MCF 10A (cell line): ENCODE measurements at regions of chr6 and their contacts with region 1.

Region 1: GRCh38 chr6:63272397-63272796 is 47.4 kb downstream of the LGSN start:
- DNase-seq: peak; percentile 62
- H3K4me3 Mint-ChIP-seq: no peak overlapping the region
- H3K27ac Mint-ChIP-seq: no peak overlapping the region
- H3K4me1 Mint-ChIP-seq: no peaks in the 10 kb centered on the region
- H3K27me3 Mint-ChIP-seq: no peaks in the 10 kb centered on the region
- CTCF ChIP-seq: peak; percentile 56

Region 2: GRCh38 chr6:61886608-61887259 is 1385.7 kb before region 1 on chr6:
- CTCF ChIA-PET with region 1: no interaction called
- POLR2A ChIA-PET with region 1: no interaction called
- intact Hi-C with region 1: loop called (anchors 5 kb)
- DNase-seq: peak; percentile 14
- H3K4me3 Mint-ChIP-seq: no peak overlapping the region
- H3K27ac Mint-ChIP-seq: no peak overlapping the region
- H3K4me1 Mint-ChIP-seq: no peaks in the 10 kb centered on the region
- H3K27me3 Mint-ChIP-seq: peaks cover 50% of the 10 kb centered on the region
- CTCF ChIP-seq: no peak

Region 3: GRCh38 chr6:62891065-62891647 is 381.2 kb before region 1 on chr6:
- CTCF ChIA-PET with region 1: interaction called, 3 read pairs
- POLR2A ChIA-PET with region 1: interaction called, 3 read pairs
- intact Hi-C with region 1: loop called (anchors 5 kb)
- DNase-seq: peak; percentile 33
- H3K4me3 Mint-ChIP-seq: no peak overlapping the region
- H3K27ac Mint-ChIP-seq: no peak overlapping the region
- H3K4me1 Mint-ChIP-seq: no peaks in the 10 kb centered on the region
- H3K27me3 Mint-ChIP-seq: peaks cover 45% of the 10 kb centered on the region
- CTCF ChIP-seq: peak; percentile 35

Region 4: DNA sequence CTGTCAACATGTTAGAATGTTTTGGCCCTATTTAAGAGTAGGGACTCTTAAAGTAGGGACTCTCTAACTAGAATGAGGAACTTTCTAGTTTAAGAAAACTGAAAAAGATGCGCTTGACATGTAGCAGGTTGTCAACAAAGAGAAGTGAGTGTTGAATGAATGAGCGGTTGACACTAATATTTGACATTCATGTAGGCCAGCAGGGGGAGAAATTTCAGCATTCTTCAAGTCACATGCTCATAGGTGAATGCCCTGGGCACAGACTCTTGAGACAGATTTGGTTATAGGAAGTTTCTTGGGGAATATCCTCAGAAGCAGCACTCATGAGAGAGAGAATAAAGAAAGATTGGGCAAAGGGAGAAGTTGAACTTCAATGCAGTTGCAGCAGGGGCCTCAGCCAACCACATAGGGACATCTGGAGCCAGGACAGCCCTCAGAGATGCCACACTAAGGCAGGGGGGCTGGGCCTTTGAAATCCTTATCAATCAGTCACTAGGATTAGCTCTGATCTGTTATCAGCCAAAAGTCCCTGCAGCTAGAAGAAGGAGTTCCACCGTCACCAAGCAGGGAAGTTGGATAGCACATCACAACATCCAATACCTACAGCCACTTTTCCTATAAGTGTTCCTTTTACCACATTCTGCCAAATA is 206.2 kb before region 1 on chr6:
- CTCF ChIA-PET with region 1: interaction called, 3 read pairs
- POLR2A ChIA-PET with region 1: no interaction called
- intact Hi-C with region 1: loop called (anchors 1 kb)
- DNase-seq: peak; percentile 46
- H3K4me3 Mint-ChIP-seq: no peak overlapping the region
- H3K27ac Mint-ChIP-seq: no peak overlapping the region
- H3K4me1 Mint-ChIP-seq: no peaks in the 10 kb centered on the region
- H3K27me3 Mint-ChIP-seq: no peaks in the 10 kb centered on the region
- CTCF ChIP-seq: peak; percentile 27